ENCODE measurements at regions of chr17 and their contacts with region 1.

Region 1: DNA sequence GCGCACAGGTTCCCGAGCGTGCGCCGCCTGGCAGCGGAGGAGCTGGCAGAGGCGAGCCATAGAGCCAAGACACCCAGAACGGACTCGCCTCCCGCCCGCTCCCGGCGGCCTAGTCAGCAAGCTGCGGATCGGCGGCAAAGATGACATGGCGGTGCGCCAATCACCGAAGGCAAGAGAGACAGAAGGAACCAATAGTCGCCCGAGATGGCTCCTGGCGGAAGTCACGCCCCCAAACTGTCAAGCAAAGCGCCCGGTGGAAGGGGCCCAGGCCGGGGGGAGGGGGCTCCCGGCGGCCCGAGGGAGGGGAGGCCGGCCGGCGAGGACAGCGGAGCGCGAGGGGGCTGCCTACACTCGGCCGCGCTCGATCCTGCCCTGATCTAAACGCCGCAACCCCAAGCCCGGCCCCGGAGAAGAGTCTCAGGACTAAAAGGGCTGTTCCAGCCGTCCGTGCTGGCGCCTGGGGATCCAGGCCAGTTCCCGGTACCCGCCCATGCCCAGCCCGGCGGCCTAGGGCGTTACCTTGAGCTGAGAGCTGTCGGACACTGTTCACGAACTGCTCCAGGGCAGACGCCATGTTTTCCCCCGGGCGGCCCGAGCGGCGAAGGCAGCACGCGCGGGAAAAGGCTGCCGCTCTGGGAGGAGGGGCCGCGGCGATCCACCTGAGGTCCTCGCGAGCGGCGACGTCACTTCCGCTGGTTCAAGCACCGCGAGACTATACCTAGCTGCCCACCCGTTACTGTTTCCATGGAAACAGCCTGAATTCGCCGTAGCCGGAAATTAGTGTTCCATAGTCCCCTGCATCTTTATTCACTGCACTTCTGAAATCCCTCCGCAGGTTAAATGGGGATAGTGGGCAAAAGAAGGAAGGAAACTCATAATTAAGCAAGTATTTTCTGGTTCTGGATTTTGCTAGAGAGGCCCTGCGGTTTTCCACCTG is at the start of gene COPS3:
- DNase-seq: peak; percentile 98

Region 2: DNA sequence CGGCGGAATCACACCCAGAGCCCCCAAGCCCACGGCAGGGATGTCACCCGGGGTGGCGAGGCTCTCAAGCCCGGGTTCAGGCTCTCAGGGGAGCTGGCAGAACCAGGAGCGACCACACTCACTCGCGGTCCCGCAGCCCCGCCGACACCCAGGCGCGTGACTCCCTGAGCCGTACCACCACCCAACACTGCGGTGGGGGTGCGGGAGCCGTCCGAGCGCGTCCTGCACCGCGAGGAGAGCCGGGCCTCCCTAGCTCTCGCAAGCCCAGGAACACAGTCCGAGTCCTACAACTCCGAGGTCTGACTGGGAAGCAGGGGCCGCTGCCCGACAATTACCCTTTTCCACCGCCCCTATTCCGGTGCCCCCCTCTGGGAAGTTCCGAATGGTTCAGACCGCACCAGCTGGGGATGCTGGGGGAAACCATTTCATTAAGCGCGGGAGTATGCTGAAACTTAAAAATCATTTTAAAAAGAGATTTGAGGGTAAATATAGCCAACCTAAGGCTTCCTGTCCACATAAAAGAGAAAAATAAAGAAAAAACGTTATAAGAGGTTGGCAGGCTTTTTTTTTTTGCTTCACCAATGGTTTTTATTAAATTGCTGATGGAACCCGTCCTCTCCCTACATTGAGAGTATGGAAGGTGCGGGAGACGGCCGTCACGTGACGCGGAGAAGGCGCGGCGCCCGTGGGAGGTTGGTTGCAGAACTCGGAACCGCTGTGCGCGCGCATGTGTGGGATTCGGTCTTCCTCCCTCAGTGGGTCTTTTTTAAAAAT is 43.7 kb before region 1 on chr17 and contains the start of gene FLCN:
- CTCF ChIA-PET with region 1: interaction called, 5 read pairs
- POLR2A ChIA-PET with region 1: interaction called, 11 read pairs
- DNase-seq: peak; percentile 83

Region 3: GRCh38 chr17:17264430-17264829 is 16.5 kb before region 1 on chr17:
- CTCF ChIA-PET with region 1: no interaction called
- POLR2A ChIA-PET with region 1: interaction called, 16 read pairs
- DNase-seq: no peak

Region 4: GRCh38 chr17:17269926-17270773 is 10.7 kb before region 1 on chr17:
- CTCF ChIA-PET with region 1: no interaction called
- POLR2A ChIA-PET with region 1: interaction called, 16 read pairs
- DNase-seq: no peak

Region 5: DNA sequence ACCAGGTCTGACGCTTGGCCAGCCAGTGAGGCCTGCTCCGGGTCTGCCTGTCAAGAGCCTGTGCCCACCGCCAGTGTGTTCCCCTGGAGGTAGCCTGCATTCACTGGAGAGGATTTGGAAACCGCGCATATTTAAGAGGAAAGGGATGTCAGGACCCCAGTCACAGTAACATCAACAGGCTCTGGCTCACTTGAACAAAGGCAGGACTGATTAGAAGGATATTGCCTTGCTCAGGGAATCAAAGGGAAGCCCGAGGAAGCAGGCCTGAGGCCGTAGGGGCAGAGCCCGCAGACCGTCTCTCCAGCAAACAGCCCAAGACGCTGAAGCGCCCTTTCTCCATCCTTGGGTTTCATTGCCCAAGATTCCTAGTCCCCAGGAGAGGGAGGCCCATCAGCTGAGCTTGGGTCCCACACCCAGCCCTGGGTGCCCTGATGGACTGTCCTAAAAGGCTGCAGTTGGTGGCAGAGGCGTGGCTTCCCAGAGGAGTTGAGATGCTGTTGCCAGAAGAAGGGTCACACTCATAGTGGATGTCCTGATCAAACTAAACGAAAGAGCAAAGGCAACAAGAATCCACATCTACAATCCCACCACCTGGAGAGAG is 45.5 kb after region 1 on chr17:
- CTCF ChIA-PET with region 1: no interaction called
- POLR2A ChIA-PET with region 1: no interaction called
- DNase-seq: no peak

Measured in HEK293T (cell line).